Testis (tissue), 5 donors: ENCODE measurements at regions of chr19 and their contacts with region 1.

Region 1: DNA sequence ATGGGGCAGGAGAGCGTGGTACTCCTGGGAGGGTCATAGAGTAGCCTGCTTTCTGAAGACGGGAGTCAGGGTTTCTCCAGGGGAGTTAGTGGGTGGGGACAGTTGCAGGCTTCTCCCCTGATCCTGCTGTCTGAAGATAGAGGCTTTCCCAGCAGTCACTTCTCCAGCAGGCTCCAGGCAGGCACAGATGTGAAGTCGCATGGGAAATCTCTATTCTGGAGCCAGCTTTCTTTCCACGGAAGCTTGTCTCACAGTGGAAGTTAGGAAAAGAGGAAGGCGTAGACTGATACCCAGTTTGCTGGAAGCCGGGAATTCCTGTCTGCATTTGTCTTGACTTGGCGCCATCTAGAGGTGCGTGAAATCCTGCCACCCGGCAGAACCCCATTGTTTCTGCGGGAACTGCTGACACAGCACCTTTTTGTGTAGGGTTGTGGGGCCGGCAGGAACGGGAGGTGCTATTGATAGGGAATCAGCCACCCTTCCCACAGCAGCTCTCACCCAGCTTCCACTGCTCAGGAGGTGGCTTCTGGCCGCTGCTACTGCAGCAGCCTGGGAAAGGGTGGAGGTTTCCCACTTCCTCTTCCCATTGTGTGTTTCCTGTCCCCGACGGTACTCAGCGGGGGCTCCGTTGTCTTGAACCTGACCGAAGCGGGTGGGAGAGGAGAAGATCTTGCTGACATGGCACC is 28.5 kb upstream of the NPAS1 start:
- DNase-seq: peak; percentile 91
- H3K4me3 ChIP-seq: no peak overlapping the region
- H3K27ac ChIP-seq: peak overlapping the region; percentile 59 to 75
- H3K4me1 ChIP-seq: peaks cover 43% of the 10 kb centered on the region
- H3K27me3 ChIP-seq: no peaks in the 10 kb centered on the region
- CTCF ChIP-seq: peak; percentile 65 to 88 (median 78)
- POLR2A ChIP-seq: no peak

Region 2: DNA sequence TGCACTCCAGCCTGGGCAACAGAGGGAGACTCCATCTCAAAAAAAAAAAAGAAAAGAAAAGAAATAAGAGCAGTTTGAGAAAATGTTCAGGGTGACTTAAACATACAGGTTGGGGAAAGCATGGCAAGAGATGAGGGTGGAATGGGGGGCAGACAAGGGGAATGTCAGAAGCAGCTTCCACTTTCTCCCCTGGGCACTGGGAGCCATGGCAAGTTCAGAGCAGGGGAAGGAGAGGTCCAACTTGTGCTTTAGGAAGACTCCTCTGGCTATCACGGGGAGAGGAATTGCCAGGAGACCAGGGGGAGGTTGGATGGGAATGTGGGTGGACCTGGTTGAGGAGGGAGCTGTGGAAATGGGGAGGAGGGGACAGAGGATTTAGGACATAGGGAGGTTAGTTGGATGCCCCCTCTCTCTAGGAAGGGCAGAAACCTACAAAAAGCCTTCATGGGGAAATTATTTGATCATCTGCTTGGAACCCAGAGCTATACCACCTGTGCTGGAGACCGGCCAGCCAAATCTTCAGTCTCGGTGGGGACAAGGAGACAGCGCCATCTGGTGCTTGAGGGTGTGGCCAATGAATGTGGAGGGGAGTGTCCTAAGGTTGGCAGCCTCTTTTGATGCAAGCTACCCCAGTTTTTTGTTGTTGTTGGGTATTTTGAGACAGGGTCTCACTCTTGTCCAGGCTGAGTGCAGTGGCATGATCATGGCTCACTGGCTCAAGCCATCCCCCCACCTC is 237.5 kb before region 1 on chr19:
- intact Hi-C with region 1: loop called (anchors 10 kb)
- DNase-seq: peak; percentile 68
- H3K4me3 ChIP-seq: no peak overlapping the region
- H3K27ac ChIP-seq: no peak overlapping the region
- H3K4me1 ChIP-seq: peaks cover 3% of the 10 kb centered on the region
- H3K27me3 ChIP-seq: no peaks in the 10 kb centered on the region
- CTCF ChIP-seq: peak; percentile 15 to 43 (median 40)
- POLR2A ChIP-seq: no peak

Region 3: DNA sequence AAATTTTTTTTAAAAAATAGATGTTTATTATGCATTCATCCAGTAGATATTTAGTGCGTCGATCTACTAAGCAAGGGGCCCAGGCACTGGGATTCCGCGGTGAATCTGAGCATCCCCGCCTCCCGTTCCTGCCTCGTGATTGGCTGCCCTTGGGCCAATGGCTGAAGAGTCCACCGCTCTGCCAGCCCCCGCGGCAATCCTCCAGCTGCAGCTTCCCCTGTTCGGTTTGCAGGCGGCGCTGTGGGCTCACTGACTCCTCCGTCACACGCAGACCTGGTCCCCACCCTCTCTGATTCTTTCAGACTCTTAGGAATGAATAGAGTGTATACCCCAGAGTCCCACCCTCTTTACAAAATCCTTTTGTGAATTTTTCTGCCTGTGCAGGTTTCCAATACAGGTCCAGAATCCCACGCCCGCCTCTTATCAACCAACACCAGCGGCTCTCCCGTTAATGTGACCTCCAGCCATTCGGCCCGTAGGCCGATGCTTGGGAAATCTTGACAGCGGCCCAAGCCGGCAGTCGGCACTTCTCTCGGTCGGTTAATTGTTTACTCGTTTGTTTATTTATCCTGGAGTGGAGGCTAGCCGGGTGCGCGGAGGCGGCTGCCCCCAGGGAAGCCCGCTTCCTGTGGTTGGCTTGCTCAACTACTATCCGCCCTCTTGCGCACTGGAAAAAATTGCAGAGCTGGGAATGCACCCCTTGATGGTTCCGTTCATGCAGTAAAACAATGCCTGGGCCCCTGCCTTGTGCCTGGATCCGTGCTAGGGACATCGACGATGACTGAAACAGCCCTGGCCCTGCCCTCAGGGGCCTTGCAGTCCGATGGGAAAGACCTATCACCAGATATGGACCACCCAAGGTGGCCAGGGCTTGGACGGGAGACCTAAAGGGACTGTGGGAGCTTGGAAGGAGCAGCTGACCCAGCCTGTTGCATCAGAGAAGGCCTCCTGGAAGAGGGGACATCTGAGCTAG is 134.8 kb before region 1 on chr19:
- intact Hi-C with region 1: loop called (anchors 5 kb)
- DNase-seq: peak; percentile 98
- H3K4me3 ChIP-seq: peak overlapping the region; percentile 10 to 53
- H3K27ac ChIP-seq: peak overlapping the region; percentile 51 to 90
- H3K4me1 ChIP-seq: peaks cover 13% of the 10 kb centered on the region
- H3K27me3 ChIP-seq: no peaks in the 10 kb centered on the region
- CTCF ChIP-seq: peak; percentile 41 to 66 (median 59)
- POLR2A ChIP-seq: no peak

Region 4: GRCh38 chr19:46924874-46925547 is 66.1 kb before region 1 on chr19:
- intact Hi-C with region 1: no loop called
- DNase-seq: no peak
- H3K4me3 ChIP-seq: no peak overlapping the region
- H3K27ac ChIP-seq: no peak overlapping the region
- H3K4me1 ChIP-seq: peaks cover 19% of the 10 kb centered on the region
- H3K27me3 ChIP-seq: no peaks in the 10 kb centered on the region
- CTCF ChIP-seq: no peak
- POLR2A ChIP-seq: no peak